GM12878 (cell line): ENCODE measurements at regions of chr12 and their contacts with region 1.

Region 1: GRCh38 chr12:104569346-104570173 is 112.8 kb downstream of the CHST11 start:
- DNase-seq: peak; percentile 88
- ATAC-seq: peak; percentile 83
- H3K4me3 ChIP-seq: peak overlapping the region; percentile 67
- H3K27ac ChIP-seq: peak overlapping the region; percentile 95
- H3K4me1 ChIP-seq: peaks cover 43% of the 10 kb centered on the region
- H3K27me3 ChIP-seq: no peaks in the 10 kb centered on the region
- CTCF ChIP-seq: no peak
- EP300 ChIP-seq: peak; percentile 46 to 77; a peak in 1 of 4 replicates
- POLR2A ChIP-seq: peak; percentile 48; the same call in 1 of the 2 replicates
- RAD21 ChIP-seq: peak; percentile 20; the same call in 1 of the 2 replicates

Region 2: DNA sequence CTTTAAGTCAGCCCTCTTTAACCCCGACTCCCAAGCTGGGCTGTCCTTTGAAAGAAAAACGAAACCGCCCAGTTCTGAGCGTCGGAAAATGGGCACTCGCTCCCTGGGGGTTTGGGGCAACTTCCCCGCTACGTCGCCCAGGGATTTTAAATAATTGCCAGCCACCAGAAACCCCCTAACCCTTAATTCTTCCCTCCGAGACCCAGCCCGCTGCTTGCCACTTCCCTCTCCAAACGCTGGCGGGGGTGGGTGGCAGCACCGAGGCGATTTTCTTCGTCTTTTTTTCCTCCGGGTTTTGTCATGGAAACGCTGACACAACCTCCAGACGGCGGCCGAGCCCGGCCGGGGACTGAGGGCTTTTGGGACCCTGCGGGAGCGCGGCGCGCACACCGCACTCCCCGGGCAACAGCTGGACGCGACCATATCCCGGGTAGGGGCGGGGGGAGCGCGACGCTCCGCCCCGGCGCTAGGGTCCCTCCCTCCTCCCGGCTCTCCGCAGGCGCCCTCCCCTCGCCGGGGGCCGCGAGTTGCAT is 113.1 kb before region 1 on chr12 and contains the start of gene CHST11:
- CTCF ChIA-PET with region 1: interaction called, 28 read pairs
- POLR2A ChIA-PET with region 1: interaction called, 7 read pairs
- RAD21 ChIA-PET with region 1: interaction called, 88 read pairs
- SMC1A ChIA-PET with region 1: interaction called, 67 read pairs
- in situ Hi-C with region 1: loop called (anchors 5 kb)
- intact Hi-C with region 1: loop called (anchors 1 kb)
- DNase-seq: no peak
- ATAC-seq: peak; percentile 76
- H3K4me3 ChIP-seq: peak within 1 kb of the TSS; percentile 100
- H3K27ac ChIP-seq: peak within 1 kb of the TSS; percentile 95
- H3K4me1 ChIP-seq: peaks cover 7% of the 10 kb centered on the region; the same call in 1 of the 2 replicates
- H3K27me3 ChIP-seq: no peaks in the 10 kb centered on the region
- CTCF ChIP-seq: peak; percentile 11 to 21 (median 15); a peak in 2 of 6 replicates
- EP300 ChIP-seq: peak; percentile 38 to 57; a peak in 1 of 4 replicates
- POLR2A ChIP-seq: no peak
- RAD21 ChIP-seq: peak; percentile 20; the same call in 1 of the 2 replicates
- polyA plus RNA-seq, gene CHST11: 1.9 to 2.5 TPM

Region 3: GRCh38 chr12:104478396-104479122 is 91.0 kb before region 1 on chr12:
- CTCF ChIA-PET with region 1: interaction called, 12 read pairs
- POLR2A ChIA-PET with region 1: interaction called, 17 read pairs
- RAD21 ChIA-PET with region 1: interaction called, 21 read pairs
- SMC1A ChIA-PET with region 1: interaction called, 29 read pairs
- in situ Hi-C with region 1: no loop called
- intact Hi-C with region 1: loop called (anchors 5 kb)
- DNase-seq: peak; percentile 80
- ATAC-seq: peak; percentile 88
- H3K4me3 ChIP-seq: peak overlapping the region; percentile 73
- H3K27ac ChIP-seq: peak overlapping the region; percentile 94
- H3K4me1 ChIP-seq: peaks cover 37% of the 10 kb centered on the region
- H3K27me3 ChIP-seq: no peaks in the 10 kb centered on the region
- CTCF ChIP-seq: no peak
- EP300 ChIP-seq: peak; percentile 17 to 81; a peak in 2 of 4 replicates
- POLR2A ChIP-seq: peak; percentile 65
- RAD21 ChIP-seq: peak; percentile 21; the same call in 1 of the 2 replicates

Region 4: GRCh38 chr12:104520242-104520900 is 49.2 kb before region 1 on chr12:
- CTCF ChIA-PET with region 1: no interaction called
- POLR2A ChIA-PET with region 1: interaction called, 8 read pairs
- RAD21 ChIA-PET with region 1: interaction called, 28 read pairs
- SMC1A ChIA-PET with region 1: interaction called, 24 read pairs
- in situ Hi-C with region 1: no loop called
- intact Hi-C with region 1: loop called (anchors 5 kb)
- DNase-seq: peak; percentile 75
- ATAC-seq: peak; percentile 79
- H3K4me3 ChIP-seq: no peak overlapping the region
- H3K27ac ChIP-seq: peak overlapping the region; percentile 60
- H3K4me1 ChIP-seq: peaks cover 49% of the 10 kb centered on the region
- H3K27me3 ChIP-seq: no peaks in the 10 kb centered on the region
- CTCF ChIP-seq: no peak
- EP300 ChIP-seq: peak; percentile 31 to 50; a peak in 1 of 4 replicates
- POLR2A ChIP-seq: no peak
- RAD21 ChIP-seq: no peak

Region 5: DNA sequence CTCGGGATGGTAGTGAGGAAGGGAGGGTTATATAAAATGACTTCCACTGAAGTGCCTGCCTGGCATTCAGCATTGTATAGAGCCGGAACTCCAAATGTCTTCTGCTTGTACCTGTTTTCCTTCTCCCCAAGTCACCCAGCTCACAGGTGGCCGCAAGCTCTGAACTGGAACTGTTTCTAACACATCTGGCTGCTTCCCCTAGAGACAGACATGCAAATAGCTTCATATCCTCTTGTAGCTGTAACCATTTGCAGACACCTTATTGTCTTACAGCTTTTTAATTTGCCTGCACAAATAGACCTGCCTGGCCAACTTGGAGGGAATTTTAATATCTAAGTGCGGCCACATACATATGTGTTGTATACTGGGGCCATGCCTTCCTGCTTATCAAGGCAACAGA is 13.2 kb after region 1 on chr12:
- CTCF ChIA-PET with region 1: interaction called, 33 read pairs
- POLR2A ChIA-PET with region 1: interaction called, 18 read pairs
- RAD21 ChIA-PET with region 1: interaction called, 101 read pairs
- SMC1A ChIA-PET with region 1: interaction called, 78 read pairs
- in situ Hi-C with region 1: no loop called
- intact Hi-C with region 1: loop called (anchors 2 kb)
- DNase-seq: peak; percentile 76
- ATAC-seq: peak; percentile 90
- H3K4me3 ChIP-seq: peak overlapping the region; percentile 37; the same call in 1 of the 2 replicates
- H3K27ac ChIP-seq: peak overlapping the region; percentile 47
- H3K4me1 ChIP-seq: peaks cover 69% of the 10 kb centered on the region
- H3K27me3 ChIP-seq: no peaks in the 10 kb centered on the region
- CTCF ChIP-seq: no peak
- EP300 ChIP-seq: peak; percentile 35 to 79; a peak in 3 of 4 replicates
- POLR2A ChIP-seq: no peak
- RAD21 ChIP-seq: no peak

Region 6: DNA sequence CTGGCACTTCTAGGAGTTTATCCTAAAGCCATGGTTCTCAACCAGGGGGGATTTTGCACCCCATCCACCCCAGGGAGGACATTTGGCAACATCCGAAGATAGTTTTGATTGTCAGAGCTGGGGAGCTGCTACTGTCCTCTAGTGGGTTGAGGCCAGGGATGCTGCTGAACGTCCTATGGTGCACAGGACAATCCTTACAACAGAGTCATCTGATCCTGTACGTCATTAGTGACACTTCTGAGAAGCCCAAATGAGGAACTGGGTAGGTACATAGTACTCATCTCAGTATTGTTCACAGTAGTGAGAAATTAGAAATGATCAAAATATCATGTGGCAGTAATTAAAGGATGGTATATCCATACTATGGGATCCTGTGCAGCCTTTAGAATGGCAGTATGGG is 72.3 kb after region 1 on chr12:
- CTCF ChIA-PET with region 1: interaction called, 3 read pairs
- POLR2A ChIA-PET with region 1: no interaction called
- RAD21 ChIA-PET with region 1: interaction called, 4 read pairs
- SMC1A ChIA-PET with region 1: interaction called, 4 read pairs
- in situ Hi-C with region 1: no loop called
- intact Hi-C with region 1: loop called (anchors 2 kb)
- DNase-seq: peak; percentile 79
- ATAC-seq: peak; percentile 92
- H3K4me3 ChIP-seq: no peak overlapping the region
- H3K27ac ChIP-seq: peak overlapping the region; percentile 78
- H3K4me1 ChIP-seq: peaks cover 43% of the 10 kb centered on the region
- H3K27me3 ChIP-seq: no peaks in the 10 kb centered on the region
- CTCF ChIP-seq: peak; percentile 37 to 65 (median 50); a peak in 5 of 6 replicates
- EP300 ChIP-seq: peak; percentile 99
- POLR2A ChIP-seq: no peak
- RAD21 ChIP-seq: peak; percentile 65

Region 7: DNA sequence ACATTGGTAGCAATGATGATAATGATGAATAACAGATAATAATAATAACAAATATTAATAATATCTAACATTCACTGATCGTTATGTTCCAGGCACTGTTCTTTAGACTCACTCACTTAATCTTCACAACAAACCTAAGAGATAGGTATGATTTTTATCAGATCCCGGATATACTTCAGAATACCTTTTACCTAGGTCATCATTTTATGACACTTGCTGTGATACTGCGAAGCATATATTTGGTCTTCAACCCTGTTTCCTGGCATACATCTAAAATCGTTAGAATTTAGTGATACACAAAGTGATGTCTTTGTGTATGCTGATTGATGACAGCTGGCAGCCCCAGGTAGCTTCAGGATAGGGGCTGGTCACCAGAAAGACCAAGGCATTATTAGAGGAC is 342.4 kb after region 1 on chr12:
- CTCF ChIA-PET with region 1: no interaction called
- POLR2A ChIA-PET with region 1: no interaction called
- RAD21 ChIA-PET with region 1: no interaction called
- SMC1A ChIA-PET with region 1: no interaction called
- in situ Hi-C with region 1: no loop called
- intact Hi-C with region 1: no loop called
- DNase-seq: no peak
- ATAC-seq: no peak
- H3K4me3 ChIP-seq: no peak overlapping the region
- H3K27ac ChIP-seq: no peak overlapping the region
- H3K4me1 ChIP-seq: no peaks in the 10 kb centered on the region
- H3K27me3 ChIP-seq: no peaks in the 10 kb centered on the region
- CTCF ChIP-seq: no peak
- EP300 ChIP-seq: no peak
- POLR2A ChIP-seq: no peak
- RAD21 ChIP-seq: no peak